ENCODE measurements at regions of chr5 and their contacts with region 1.

Region 1: DNA sequence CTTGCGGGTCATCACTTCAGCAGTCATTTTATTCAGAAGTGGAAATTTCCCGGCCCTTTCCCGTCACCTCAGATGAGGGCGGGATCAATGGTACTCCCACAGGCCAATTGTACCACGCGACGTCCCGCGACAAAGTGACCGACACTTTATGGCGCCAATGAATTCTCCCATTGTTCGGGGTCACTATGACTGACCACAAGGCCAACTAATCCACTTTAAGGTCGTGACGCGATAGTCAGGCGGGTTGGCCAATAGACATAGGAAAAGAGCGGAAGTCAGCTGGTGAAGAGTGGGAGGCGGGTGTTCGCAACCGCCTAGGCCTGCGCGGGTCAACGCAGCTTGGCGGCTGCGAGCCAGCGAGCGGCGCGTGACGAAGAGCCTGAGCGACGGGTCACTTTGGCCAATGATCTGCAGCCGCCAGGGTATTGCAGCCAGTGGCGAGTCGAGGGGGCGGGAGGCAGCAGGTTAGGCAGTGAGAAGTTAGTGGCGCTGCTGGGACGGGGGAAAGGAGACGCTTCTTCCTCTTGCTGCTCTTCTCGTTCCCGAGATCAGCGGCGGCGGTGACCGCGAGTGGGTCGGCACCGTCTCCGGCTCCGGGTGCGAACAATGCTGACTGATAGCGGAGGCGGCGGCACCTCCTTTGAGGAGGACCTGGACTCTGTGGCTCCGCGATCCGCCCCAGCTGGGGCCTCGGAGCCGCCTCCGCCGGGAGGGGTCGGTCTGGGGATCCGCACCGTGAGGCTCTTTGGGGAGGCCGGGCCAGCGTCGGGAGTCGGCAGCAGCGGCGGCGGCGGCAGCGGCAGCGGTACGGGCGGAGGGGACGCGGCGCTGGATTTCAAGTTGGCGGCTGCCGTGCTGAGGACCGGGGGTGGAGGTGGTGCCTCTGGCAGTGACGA is at the start of gene ANKHD1:
- DNase-seq: peak; percentile 100
- H3K4me3 ChIP-seq: peak within 1 kb of the TSS; percentile 42 to 92 (median 87)
- H3K27ac ChIP-seq: peak within 1 kb of the TSS; percentile 44
- H3K4me1 ChIP-seq: peaks cover 8% of the 10 kb centered on the region
- H3K27me3 ChIP-seq: no peaks in the 10 kb centered on the region
- CTCF ChIP-seq: no peak
- POLR2A ChIP-seq: peak; percentile 67
- total RNA-seq, gene ANKHD1: 87.0 and 92.4 TPM in 2 replicates

Region 2: GRCh38 chr5:140547508-140548299 is 146.1 kb after region 1 on chr5 and contains the start of gene EIF4EBP3:
- CTCF ChIA-PET with region 1: interaction called, 3 read pairs
- POLR2A ChIA-PET with region 1: interaction called, 4 read pairs
- dilution Hi-C with region 1: no loop called
- intact Hi-C with region 1: loop called (anchors 1 kb)
- DNase-seq: peak; percentile 98
- H3K4me3 ChIP-seq: peak within 1 kb of the TSS in 1 of 3 experiments; percentile 20
- H3K27ac ChIP-seq: no peak within 1 kb of the TSS
- H3K4me1 ChIP-seq: peaks cover 24% of the 10 kb centered on the region
- H3K27me3 ChIP-seq: no peaks in the 10 kb centered on the region
- CTCF ChIP-seq: peak; percentile 45 to 69
- POLR2A ChIP-seq: no peak
- total RNA-seq, gene EIF4EBP3: 7.6 and 8.8 TPM in 2 replicates

Region 3: DNA sequence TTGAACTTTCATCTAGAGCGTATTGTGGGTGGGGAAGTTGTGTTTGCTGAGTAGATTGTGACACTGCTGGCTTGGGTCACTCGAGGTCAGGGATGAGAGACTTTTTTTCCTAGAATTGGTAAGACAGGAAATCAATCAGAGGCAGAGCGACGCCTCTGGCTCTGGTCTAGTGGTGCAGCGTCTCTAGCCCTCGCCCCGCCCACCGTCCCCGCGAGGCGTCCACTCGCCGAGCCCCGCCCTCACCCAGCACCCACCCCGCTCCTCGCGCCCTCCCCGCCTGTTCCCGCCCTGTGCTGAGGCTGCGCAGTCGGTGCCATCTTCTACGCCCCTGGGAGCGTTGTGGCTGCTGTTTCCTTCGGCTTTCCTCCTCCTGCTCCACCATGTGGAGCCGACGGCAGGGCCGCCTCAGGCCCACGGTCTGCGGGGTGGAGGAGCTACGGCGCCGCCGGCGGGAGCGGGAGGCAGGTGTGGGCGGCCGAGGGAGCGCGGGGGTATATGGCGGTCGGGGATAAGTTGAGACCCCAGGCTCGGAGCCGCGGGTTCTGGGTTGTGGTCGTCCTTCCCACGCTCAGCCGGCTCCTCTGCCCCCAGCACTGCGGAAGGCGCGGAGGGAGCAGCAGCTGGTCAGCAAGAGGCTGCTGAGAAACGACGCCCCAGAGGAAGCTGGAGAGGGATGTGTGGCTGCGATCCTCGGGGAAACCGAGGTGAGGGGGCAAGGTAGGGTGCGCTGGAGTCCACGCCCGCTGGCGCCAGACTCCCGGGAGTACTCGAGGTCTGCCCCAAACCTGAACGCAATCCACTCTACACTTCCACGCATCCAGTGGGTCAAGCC is 237.8 kb after region 1 on chr5 and contains the start of gene TMCO6:
- CTCF ChIA-PET with region 1: interaction called, 5 read pairs
- POLR2A ChIA-PET with region 1: no interaction called
- dilution Hi-C with region 1: no loop called
- intact Hi-C with region 1: loop called (anchors 1 kb)
- DNase-seq: peak; percentile 96
- H3K4me3 ChIP-seq: peak within 1 kb of the TSS; percentile 37 to 54 (median 40)
- H3K27ac ChIP-seq: peak within 1 kb of the TSS; percentile 41
- H3K4me1 ChIP-seq: peaks cover 11% of the 10 kb centered on the region
- H3K27me3 ChIP-seq: no peaks in the 10 kb centered on the region
- CTCF ChIP-seq: peak; percentile 31 to 74
- POLR2A ChIP-seq: peak; percentile 89
- total RNA-seq, gene TMCO6: 14.2 and 23.7 TPM in 2 replicates

Region 4: GRCh38 chr5:140664359-140665119 is 262.9 kb after region 1 on chr5 and contains the start of gene WDR55:
- CTCF ChIA-PET with region 1: interaction called, 3 read pairs
- POLR2A ChIA-PET with region 1: no interaction called
- dilution Hi-C with region 1: no loop called
- intact Hi-C with region 1: loop called (anchors 1 kb)
- DNase-seq: peak; percentile 88
- H3K4me3 ChIP-seq: peak within 1 kb of the TSS; percentile 73 to 93 (median 81)
- H3K27ac ChIP-seq: peak within 1 kb of the TSS; percentile 73
- H3K4me1 ChIP-seq: peaks cover 3% of the 10 kb centered on the region
- H3K27me3 ChIP-seq: no peaks in the 10 kb centered on the region
- CTCF ChIP-seq: no peak
- POLR2A ChIP-seq: peak; percentile 94
- total RNA-seq, gene WDR55: 24.0 and 25.3 TPM in 2 replicates

Region 5: GRCh38 chr5:140868721-140869554 is 467.3 kb after region 1 on chr5 and contains the start of gene PCDHA11:
- CTCF ChIA-PET with region 1: no interaction called
- POLR2A ChIA-PET with region 1: no interaction called
- dilution Hi-C with region 1: no loop called
- intact Hi-C with region 1: no loop called
- DNase-seq: peak; percentile 12
- H3K4me3 ChIP-seq: no peak within 1 kb of the TSS
- H3K27ac ChIP-seq: no peak within 1 kb of the TSS
- H3K4me1 ChIP-seq: no peaks in the 10 kb centered on the region
- H3K27me3 ChIP-seq: no peaks in the 10 kb centered on the region
- CTCF ChIP-seq: peak in 1 of 2 donors; percentile 9
- POLR2A ChIP-seq: no peak
- total RNA-seq, gene PCDHA11: 0.12 TPM in 1 of 2 replicates, not detected in the other